Ascending aorta (tissue), 2 donors: ENCODE measurements at regions of chr17 and their contacts with region 1.

Region 1: DNA sequence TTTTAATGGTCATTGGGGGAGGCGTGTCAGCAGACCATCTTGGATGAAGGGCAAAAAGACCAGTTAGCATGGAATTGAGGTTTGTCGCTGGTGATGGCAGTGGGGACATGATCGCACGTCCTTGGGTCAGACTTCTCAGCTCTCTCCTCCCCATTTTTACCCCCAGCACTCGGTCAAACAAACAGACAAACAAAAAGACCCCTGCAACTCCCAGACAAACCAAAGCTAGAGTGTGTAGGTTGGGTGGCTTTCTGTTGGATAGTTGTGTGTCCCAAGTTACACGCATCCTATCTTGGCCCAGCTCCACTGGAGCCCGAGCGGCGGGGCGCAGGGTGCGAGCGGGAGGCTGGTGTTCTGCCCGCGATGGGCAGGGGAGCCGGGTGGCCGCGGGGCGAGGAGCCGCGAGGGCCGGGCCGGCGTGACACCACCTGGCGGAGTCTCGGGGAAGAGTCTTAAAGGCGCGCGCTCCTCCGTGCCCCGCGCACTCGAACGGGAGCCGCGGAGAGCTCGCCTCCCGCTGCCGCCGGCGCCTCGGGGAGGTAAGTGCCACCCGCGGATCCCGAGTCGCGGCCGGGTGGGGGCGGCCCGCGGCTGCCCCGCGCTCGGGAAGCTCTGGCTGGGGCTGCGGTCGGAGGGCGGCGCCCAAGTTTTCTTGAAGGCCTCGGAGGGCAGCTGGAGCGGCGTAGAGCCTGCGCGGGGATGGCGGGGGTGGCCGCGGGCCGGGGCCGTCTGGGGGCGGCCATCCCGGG is 18.5 kb upstream of the NTN1 start:
- DNase-seq: peak in 1 of 2 donors; percentile 65
- H3K4me3 ChIP-seq: peak overlapping the region; percentile 64 to 77
- H3K27ac ChIP-seq: peak overlapping the region in 1 of 2 donors; percentile 19
- H3K4me1 ChIP-seq: peaks cover 0 to 4% of the 10 kb centered on the region in 2 donors
- H3K27me3 ChIP-seq: no peaks in the 10 kb centered on the region
- CTCF ChIP-seq: peak; percentile 30 to 37 (median 30)

Region 2: DNA sequence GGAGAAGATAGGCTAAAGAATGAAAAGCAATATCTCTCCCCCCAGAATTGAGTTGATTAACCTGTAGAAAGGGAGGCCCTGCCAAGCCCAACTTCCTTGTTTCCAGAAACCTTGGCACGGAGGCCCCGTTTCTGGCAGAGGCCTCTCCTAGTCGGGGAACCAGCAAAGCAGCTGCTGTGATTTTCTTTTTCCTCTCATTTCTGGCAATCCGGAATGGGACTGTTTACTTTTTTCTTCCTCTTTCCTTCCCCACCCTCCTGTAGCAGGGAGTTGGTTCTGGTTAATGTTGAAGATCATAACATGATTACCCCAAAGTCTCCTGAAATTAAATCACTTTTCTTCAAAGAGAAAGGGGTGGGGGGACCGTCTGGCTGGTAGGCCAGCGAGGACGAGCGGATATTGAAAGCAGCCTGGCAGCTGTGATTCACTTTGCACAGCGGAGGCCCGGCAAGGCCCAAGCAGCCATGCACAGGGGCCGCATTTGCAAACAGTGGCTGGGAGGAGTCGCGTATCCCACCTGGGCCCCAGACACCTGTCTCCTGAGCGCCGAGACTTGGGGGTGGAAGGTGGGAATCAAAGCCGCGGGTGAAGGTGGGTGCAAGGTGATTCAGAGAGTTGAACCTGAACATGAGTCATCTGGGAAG is 70.0 kb after region 1 on chr17:
- intact Hi-C with region 1: loop called (anchors 1 kb)
- DNase-seq: peak in 1 of 2 donors; percentile 84
- H3K4me3 ChIP-seq: peak overlapping the region; percentile 4 to 46
- H3K27ac ChIP-seq: peak overlapping the region; percentile 69 to 82
- H3K4me1 ChIP-seq: peaks cover 14 to 34% of the 10 kb centered on the region in 2 donors
- H3K27me3 ChIP-seq: no peaks in the 10 kb centered on the region
- CTCF ChIP-seq: no peak